ENCODE measurements at regions of chr9 and their contacts with region 1.

Region 1: GRCh38 chr9:129436751-129437625 is 183.9 kb downstream of the C9orf50 start:
- DNase-seq: peak; percentile 82
- H3K4me3 Mint-ChIP-seq: peak overlapping the region; percentile 76
- H3K27ac Mint-ChIP-seq: peak overlapping the region; percentile 9
- H3K4me1 Mint-ChIP-seq: peaks cover 11% of the 10 kb centered on the region
- H3K27me3 Mint-ChIP-seq: peaks cover 66% of the 10 kb centered on the region

Region 2: DNA sequence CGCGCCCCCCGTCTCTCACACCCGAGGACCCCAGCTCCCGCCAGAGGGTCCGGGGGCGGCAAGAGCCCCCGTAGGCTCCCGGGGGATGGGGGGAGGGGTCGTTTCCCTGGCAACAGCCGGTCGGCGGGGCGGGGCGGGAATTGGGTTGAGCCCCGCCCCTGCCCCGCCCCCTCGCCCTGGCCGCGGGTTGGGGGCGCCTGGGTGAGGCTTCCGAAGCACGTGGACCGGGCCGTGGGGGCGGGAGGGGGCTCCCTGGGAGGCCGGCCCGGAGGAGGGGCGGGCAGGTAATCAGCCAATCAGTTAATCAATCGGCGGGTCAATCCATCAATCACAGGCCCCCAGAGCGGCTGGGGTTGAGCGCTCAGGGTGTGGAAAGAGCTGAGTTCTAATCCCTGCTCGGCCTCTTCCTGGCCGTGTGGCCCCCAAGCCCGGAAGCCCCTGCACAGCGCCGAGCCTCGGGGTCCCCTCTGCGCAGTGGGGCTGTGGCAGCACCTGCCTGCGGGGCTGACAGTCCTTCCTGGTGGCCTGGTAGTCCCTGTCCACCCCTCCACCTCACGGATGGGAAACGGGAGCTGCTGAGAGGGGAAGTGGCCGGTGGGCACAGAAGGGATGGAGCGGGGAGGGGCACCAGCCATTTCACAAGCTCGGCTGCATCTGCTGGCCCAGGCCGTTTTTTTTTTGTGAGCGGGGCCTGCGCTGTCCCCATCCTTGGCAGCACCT is 84.7 kb before region 1 on chr9:
- intact Hi-C with region 1: no loop called
- DNase-seq: no peak
- H3K4me3 Mint-ChIP-seq: peak overlapping the region; percentile 65
- H3K27ac Mint-ChIP-seq: no peak overlapping the region
- H3K4me1 Mint-ChIP-seq: no peaks in the 10 kb centered on the region
- H3K27me3 Mint-ChIP-seq: peaks cover 5% of the 10 kb centered on the region

Region 3: DNA sequence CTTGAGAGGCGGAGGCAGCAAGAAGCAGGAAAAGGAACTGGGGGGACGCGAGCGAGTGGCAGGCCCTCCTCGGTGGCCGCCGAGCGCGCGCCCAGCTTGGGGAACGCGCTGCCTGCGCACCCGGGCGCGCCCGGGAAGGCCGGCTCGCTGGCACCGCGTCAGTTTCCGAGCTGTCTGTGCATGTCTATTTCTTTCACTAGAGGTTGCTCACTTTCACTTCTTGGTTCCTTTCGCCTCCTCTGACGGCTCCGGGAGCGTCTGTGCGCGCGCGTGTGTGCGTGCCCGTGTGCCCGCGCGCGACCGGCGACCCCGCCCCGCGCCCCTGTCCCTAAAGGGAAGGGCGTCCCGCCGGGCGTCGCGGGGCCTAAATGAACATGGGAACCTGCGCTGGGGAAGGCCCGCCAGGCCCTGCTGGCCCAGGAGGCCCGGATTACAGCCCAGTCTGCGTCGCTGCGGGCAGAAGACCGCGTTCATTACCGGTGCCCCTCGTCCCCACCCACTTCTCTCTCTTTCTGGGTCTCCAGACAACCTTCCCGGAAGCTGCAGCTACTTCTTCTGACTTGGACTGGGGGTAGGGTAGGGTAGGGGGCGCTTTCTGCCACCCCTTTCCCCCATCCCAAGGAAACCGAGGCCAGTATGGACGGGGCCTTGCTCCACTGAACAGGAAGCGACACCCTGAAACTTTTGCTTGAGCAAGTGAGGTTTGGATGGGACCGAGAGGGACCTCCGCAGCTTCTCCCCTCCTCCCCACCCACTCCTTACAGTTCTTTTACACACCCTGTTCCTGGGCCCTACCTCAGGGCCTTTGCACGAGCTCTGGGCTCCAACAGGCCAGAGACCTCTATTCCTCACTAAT is 53.2 kb before region 1 on chr9:
- intact Hi-C with region 1: loop called (anchors 2 kb)
- DNase-seq: peak; percentile 92
- H3K4me3 Mint-ChIP-seq: peak overlapping the region; percentile 68
- H3K27ac Mint-ChIP-seq: peak overlapping the region; percentile 47
- H3K4me1 Mint-ChIP-seq: peaks cover 4% of the 10 kb centered on the region
- H3K27me3 Mint-ChIP-seq: peaks cover 7% of the 10 kb centered on the region

Region 4: GRCh38 chr9:129413537-129414376 is 23.2 kb before region 1 on chr9:
- intact Hi-C with region 1: no loop called
- DNase-seq: peak; percentile 99
- H3K4me3 Mint-ChIP-seq: peak overlapping the region; percentile 86
- H3K27ac Mint-ChIP-seq: peak overlapping the region; percentile 98
- H3K4me1 Mint-ChIP-seq: peaks cover 19% of the 10 kb centered on the region
- H3K27me3 Mint-ChIP-seq: no peaks in the 10 kb centered on the region

Region 5: GRCh38 chr9:129726322-129727160 is 289.6 kb after region 1 on chr9:
- intact Hi-C with region 1: no loop called
- DNase-seq: peak; percentile 90
- H3K4me3 Mint-ChIP-seq: peak overlapping the region; percentile 52
- H3K27ac Mint-ChIP-seq: no peak overlapping the region
- H3K4me1 Mint-ChIP-seq: peaks cover 4% of the 10 kb centered on the region
- H3K27me3 Mint-ChIP-seq: peaks cover 10% of the 10 kb centered on the region

Measured in activated CD4-positive, alpha-beta T cell treated with anti-CD3 and anti-CD28 coated beads, Interleukin-2, amount 10 ng/mL, durations not matched to agents 24 days and 14 days (primary cell).